HepG2 (cell line): ENCODE measurements at regions of chr9 and their contacts with region 1.

Region 1: GRCh38 chr9:7300484-7300883 is 499.1 kb downstream of the DMAC1 start:
- DNase-seq: no peak
- ATAC-seq: no peak
- H3K4me3 ChIP-seq: no peak overlapping the region
- H3K27ac ChIP-seq: no peak overlapping the region
- H3K4me1 ChIP-seq: no peaks in the 10 kb centered on the region
- H3K27me3 ChIP-seq: no peaks in the 10 kb centered on the region
- CTCF ChIP-seq: no peak
- EP300 ChIP-seq: no peak
- POLR2A ChIP-seq: no peak
- RAD21 ChIP-seq: no peak

Region 2: GRCh38 chr9:7368410-7369292 is 68.2 kb after region 1 on chr9:
- CTCF ChIA-PET with region 1: no interaction called
- POLR2A ChIA-PET with region 1: no interaction called
- in situ Hi-C with region 1: loop called (anchors 10 kb)
- intact Hi-C with region 1: no loop called
- DNase-seq: no peak
- ATAC-seq: no peak
- H3K4me3 ChIP-seq: no peak overlapping the region
- H3K27ac ChIP-seq: no peak overlapping the region
- H3K4me1 ChIP-seq: peaks cover 18% of the 10 kb centered on the region
- H3K27me3 ChIP-seq: no peaks in the 10 kb centered on the region
- CTCF ChIP-seq: no peak
- EP300 ChIP-seq: no peak
- POLR2A ChIP-seq: no peak
- RAD21 ChIP-seq: no peak

Region 3: GRCh38 chr9:8143677-8144076 is 843.2 kb after region 1 on chr9:
- CTCF ChIA-PET with region 1: no interaction called
- POLR2A ChIA-PET with region 1: no interaction called
- in situ Hi-C with region 1: no loop called
- intact Hi-C with region 1: no loop called
- DNase-seq: no peak
- ATAC-seq: no peak
- H3K4me3 ChIP-seq: no peak overlapping the region
- H3K27ac ChIP-seq: no peak overlapping the region
- H3K4me1 ChIP-seq: no peaks in the 10 kb centered on the region
- H3K27me3 ChIP-seq: no peaks in the 10 kb centered on the region
- CTCF ChIP-seq: no peak
- EP300 ChIP-seq: no peak
- POLR2A ChIP-seq: no peak
- RAD21 ChIP-seq: no peak